HEK293 (cell line): ENCODE measurements at regions of chr21 and their contacts with region 1.

Region 1: DNA sequence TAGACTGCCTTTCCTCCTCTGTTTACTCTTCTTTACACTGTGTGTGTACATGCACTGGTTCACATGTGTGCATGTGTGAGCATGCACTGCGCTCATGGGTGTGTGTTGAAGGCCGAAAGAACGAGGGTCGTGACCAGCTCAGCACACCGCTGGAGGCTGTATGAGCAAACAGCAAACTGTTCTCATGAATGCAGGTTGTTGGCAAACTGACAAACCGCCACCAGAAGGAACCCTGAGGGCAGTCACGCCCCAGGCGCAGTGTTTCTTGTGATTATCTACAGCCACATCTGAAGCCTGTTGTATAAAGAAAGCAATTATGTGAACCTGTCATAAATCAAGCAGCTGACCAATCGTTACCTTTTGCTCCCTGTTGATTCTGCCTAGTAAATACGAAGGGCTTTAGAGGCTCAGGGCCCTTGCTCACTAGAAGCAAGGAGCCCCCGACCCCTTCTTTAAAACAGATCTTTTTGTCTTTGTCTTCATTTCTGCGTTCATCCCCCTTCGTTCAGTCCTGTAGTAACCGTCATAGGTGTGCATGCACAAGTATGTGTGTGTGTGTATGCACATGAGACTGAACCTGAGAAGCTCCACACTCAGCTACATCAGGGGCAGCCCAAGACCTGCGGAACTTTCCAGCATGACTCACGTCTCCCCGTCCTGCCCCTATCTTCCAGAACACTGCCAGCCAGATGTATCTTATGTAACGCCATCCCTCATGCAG is 16.7 kb upstream of the RIPK4 start:
- H3K4me3 ChIP-seq: no peak overlapping the region
- H3K27ac ChIP-seq: peak overlapping the region; percentile 39
- H3K4me1 ChIP-seq: peaks cover 29% of the 10 kb centered on the region
- CTCF ChIP-seq: no peak

Region 2: GRCh38 chr21:41768437-41769061 is 15.1 kb before region 1 on chr21:
- CTCF ChIA-PET with region 1: interaction called, 8 read pairs
- POLR2A ChIA-PET with region 1: interaction called, 11 read pairs
- H3K4me3 ChIP-seq: peak overlapping the region; percentile 14
- H3K27ac ChIP-seq: no peak overlapping the region; the same call in 1 of the 2 replicates
- H3K4me1 ChIP-seq: peaks cover 26% of the 10 kb centered on the region
- CTCF ChIP-seq: no peak